CD4-positive, alpha-beta memory T cell (primary cell): ENCODE measurements at regions of chr5 and their contacts with region 1.

Region 1: GRCh38 chr5:172714491-172715421 is 56.2 kb downstream of the DUSP1 start:
- DNase-seq: peak; percentile 58 to 69 (median 61)
- H3K4me3 ChIP-seq: no peak overlapping the region
- H3K4me3 Mint-ChIP-seq: no peak overlapping the region
- H3K27ac ChIP-seq: no peak overlapping the region
- H3K27ac Mint-ChIP-seq: peak overlapping the region in 5 of 7 donors; percentile 0 to 62 (median 41)
- H3K4me1 ChIP-seq: peaks cover 11% of the 10 kb centered on the region
- H3K4me1 Mint-ChIP-seq: peaks cover 15 to 22% (median 17%) of the 10 kb centered on the region in 4 donors
- H3K27me3 ChIP-seq: no peaks in the 10 kb centered on the region
- H3K27me3 Mint-ChIP-seq: peaks cover 9 to 13% of the 10 kb centered on the region in 2 donors

Region 2: DNA sequence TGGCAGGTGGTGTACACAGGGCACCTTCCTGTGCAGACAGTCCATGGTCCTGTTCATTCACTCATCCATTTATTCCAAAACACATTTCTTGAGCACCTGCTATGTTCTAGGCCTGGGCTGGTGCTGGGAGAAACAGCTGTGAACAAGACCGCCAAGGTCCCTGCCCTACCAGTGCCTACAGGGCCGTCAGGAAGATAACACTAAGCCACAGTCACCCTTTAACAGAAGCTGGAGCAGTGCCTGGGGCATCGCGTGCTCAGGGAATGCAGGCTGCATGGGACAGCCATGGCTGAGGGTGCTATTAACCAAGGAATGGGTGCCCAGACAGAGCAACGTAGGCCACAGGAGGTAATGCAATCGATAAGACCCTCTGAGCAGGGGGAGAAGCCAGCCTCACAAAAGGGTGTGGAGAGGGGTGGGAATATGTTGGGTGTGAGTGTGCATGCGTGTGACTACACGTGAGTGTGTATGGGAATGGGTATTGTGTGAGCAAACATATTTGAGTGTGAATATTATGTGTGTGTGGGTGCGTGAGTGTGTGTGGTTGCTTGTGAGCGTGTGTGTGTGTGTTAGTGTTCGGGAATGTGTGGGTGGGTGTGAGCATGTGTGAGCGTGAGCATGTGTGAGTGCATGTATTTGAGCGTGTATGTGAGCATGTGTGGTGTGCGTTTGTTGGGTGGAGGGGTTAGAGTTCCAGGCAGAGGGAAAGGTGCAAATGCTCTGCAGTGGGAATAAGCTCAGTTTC is 37.2 kb after region 1 on chr5:
- CTCF ChIA-PET with region 1: interaction called, 10 read pairs
- POLR2A ChIA-PET with region 1: no interaction called
- intact Hi-C with region 1: no loop called
- DNase-seq: no peak
- H3K4me3 ChIP-seq: no peak overlapping the region
- H3K4me3 Mint-ChIP-seq: peak overlapping the region in 1 of 8 donors; percentile 4
- H3K27ac ChIP-seq: no peak overlapping the region
- H3K27ac Mint-ChIP-seq: peak overlapping the region in 2 of 7 donors; percentile 20 to 70
- H3K4me1 ChIP-seq: no peaks in the 10 kb centered on the region
- H3K4me1 Mint-ChIP-seq: no peaks in the 10 kb centered on the region
- H3K27me3 ChIP-seq: no peaks in the 10 kb centered on the region
- H3K27me3 Mint-ChIP-seq: peaks cover 0 to 1% of the 10 kb centered on the region in 2 donors

Region 3: GRCh38 chr5:172777881-172778814 is 63.4 kb after region 1 on chr5:
- CTCF ChIA-PET with region 1: interaction called, 68 read pairs
- POLR2A ChIA-PET with region 1: interaction called, 97 read pairs
- intact Hi-C with region 1: no loop called
- DNase-seq: no peak
- H3K4me3 ChIP-seq: peak overlapping the region; percentile 1 to 7
- H3K4me3 Mint-ChIP-seq: peak overlapping the region; percentile 11 to 87 (median 78)
- H3K27ac ChIP-seq: peak overlapping the region; percentile 89
- H3K27ac Mint-ChIP-seq: peak overlapping the region; percentile 95 to 99 (median 98)
- H3K4me1 ChIP-seq: peaks cover 42% of the 10 kb centered on the region
- H3K4me1 Mint-ChIP-seq: peaks cover 29 to 51% (median 41%) of the 10 kb centered on the region in 4 donors
- H3K27me3 ChIP-seq: no peaks in the 10 kb centered on the region
- H3K27me3 Mint-ChIP-seq: no peaks in the 10 kb centered on the region

Region 4: GRCh38 chr5:172904643-172905347 is 190.0 kb after region 1 on chr5:
- CTCF ChIA-PET with region 1: interaction called, 20 read pairs
- POLR2A ChIA-PET with region 1: no interaction called
- intact Hi-C with region 1: no loop called
- DNase-seq: no peak
- H3K4me3 ChIP-seq: no peak overlapping the region
- H3K4me3 Mint-ChIP-seq: no peak overlapping the region
- H3K27ac ChIP-seq: no peak overlapping the region
- H3K27ac Mint-ChIP-seq: peak overlapping the region in 1 of 7 donors; percentile 52
- H3K4me1 ChIP-seq: no peaks in the 10 kb centered on the region
- H3K4me1 Mint-ChIP-seq: peaks cover 0 to under 1% (median 0%) of the 10 kb centered on the region in 4 donors
- H3K27me3 ChIP-seq: no peaks in the 10 kb centered on the region
- H3K27me3 Mint-ChIP-seq: no peaks in the 10 kb centered on the region

Region 5: GRCh38 chr5:172932313-172933017 is 217.7 kb after region 1 on chr5:
- CTCF ChIA-PET with region 1: interaction called, 547 read pairs
- POLR2A ChIA-PET with region 1: interaction called, 15 read pairs
- intact Hi-C with region 1: loop called (anchors 1 kb)
- DNase-seq: peak; percentile 64 to 74 (median 70)
- H3K4me3 ChIP-seq: no peak overlapping the region
- H3K4me3 Mint-ChIP-seq: no peak overlapping the region
- H3K27ac ChIP-seq: no peak overlapping the region
- H3K27ac Mint-ChIP-seq: peak overlapping the region in 5 of 7 donors; percentile 54 to 80 (median 66)
- H3K4me1 ChIP-seq: peaks cover 4% of the 10 kb centered on the region
- H3K4me1 Mint-ChIP-seq: peaks cover 6 to 8% (median 6%) of the 10 kb centered on the region in 4 donors
- H3K27me3 ChIP-seq: no peaks in the 10 kb centered on the region
- H3K27me3 Mint-ChIP-seq: no peaks in the 10 kb centered on the region

Region 6: GRCh38 chr5:172958331-172959046 is 243.7 kb after region 1 on chr5:
- CTCF ChIA-PET with region 1: interaction called, 8 read pairs
- POLR2A ChIA-PET with region 1: interaction called, 4 read pairs
- intact Hi-C with region 1: loop called (anchors 1 kb)
- DNase-seq: peak; percentile 62 to 70 (median 67)
- H3K4me3 ChIP-seq: peak overlapping the region in 1 of 2 donors; percentile 97
- H3K4me3 Mint-ChIP-seq: peak overlapping the region; percentile 86 to 98 (median 96)
- H3K27ac ChIP-seq: peak overlapping the region; percentile 82
- H3K27ac Mint-ChIP-seq: peak overlapping the region; percentile 92 to 99 (median 98)
- H3K4me1 ChIP-seq: peaks cover 16% of the 10 kb centered on the region
- H3K4me1 Mint-ChIP-seq: peaks cover 18 to 43% (median 27%) of the 10 kb centered on the region in 4 donors
- H3K27me3 ChIP-seq: no peaks in the 10 kb centered on the region
- H3K27me3 Mint-ChIP-seq: no peaks in the 10 kb centered on the region

Region 7: GRCh38 chr5:173204185-173204979 is 489.6 kb after region 1 on chr5:
- CTCF ChIA-PET with region 1: no interaction called
- POLR2A ChIA-PET with region 1: no interaction called
- intact Hi-C with region 1: loop called (anchors 2 kb)
- DNase-seq: peak in 4 of 5 donors; percentile 24 to 34 (median 30)
- H3K4me3 ChIP-seq: no peak overlapping the region
- H3K4me3 Mint-ChIP-seq: no peak overlapping the region
- H3K27ac ChIP-seq: no peak overlapping the region
- H3K27ac Mint-ChIP-seq: peak overlapping the region in 1 of 7 donors; percentile 57
- H3K4me1 ChIP-seq: no peaks in the 10 kb centered on the region
- H3K4me1 Mint-ChIP-seq: peaks cover 0 to 5% (median 2%) of the 10 kb centered on the region in 4 donors
- H3K27me3 ChIP-seq: peaks cover 7% of the 10 kb centered on the region
- H3K27me3 Mint-ChIP-seq: peaks cover 25 to 48% of the 10 kb centered on the region in 2 donors